K562 (cell line): ENCODE measurements at regions of chrX and their contacts with region 1.

Region 1: DNA sequence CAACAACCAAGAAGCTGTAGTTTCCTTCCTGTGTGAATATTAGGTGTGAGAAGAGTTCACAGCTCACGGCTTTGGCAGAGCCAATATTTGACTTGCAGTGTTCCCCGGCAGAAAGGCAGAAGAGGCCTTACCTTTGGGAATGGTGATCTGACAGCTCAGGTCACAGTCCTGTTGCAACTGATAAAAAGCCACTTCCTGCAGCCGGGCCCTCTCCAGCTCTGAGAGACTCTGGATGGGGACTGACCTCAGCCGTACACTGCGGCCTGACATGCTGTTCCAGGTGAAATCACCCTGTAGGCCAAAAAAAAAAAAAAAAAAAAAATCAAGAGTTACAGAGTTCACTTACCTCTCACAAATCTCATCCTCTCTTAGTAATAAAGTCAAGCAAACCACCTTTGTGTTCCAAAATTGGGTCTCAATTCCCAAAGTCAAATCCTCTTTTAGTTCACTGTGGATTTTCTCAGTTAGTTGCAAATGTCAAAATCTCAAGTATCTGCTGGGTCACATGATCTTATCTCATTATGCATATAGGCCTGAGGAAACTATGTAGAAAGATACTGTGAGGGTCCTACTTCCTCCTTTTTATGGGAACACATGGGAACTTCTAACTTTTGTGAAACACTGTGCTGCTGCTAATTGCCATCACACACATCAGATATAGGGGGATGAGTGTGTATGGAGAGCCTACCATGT is 38.6 kb upstream of the AMELX start:
- DNase-seq: peak; percentile 30 to 87 (median 56)
- ATAC-seq: peak; percentile 97
- H3K4me3 ChIP-seq: no peak overlapping the region
- H3K27ac ChIP-seq: peak overlapping the region; percentile 85
- H3K4me1 ChIP-seq: peaks cover 3 to 42% of the 10 kb centered on the region in 2 experiments; a peak in 3 of 5 replicates
- H3K27me3 ChIP-seq: no peaks in the 10 kb centered on the region
- CTCF ChIP-seq: no peak
- EP300 ChIP-seq: peak; percentile 80
- POLR2A ChIP-seq: no peak
- RAD21 ChIP-seq: 0 out of 4 replicates have a peak, but pooled peaks of 1 of the 2 experiments have one; percentile 2

Region 2: DNA sequence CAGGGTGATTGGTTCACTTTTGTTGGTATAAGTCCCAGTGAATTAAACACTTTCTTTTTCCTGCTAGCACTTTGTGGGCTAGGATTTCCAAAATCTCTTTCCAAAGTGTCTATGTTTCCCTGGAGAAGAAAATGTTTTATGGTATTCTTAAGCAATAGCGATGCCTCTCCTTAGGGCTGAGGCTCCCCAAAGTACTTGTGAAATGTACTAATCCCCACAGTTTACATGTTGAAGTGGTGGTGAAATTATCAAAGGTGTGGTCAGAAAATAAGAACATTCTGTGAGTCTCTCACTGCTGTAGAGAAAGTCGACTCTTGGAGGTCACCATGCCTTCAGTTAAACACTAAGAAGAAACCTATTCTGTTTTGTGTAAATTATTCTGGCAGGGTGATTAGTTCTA is 12.8 kb before region 1 on chrX:
- CTCF ChIA-PET with region 1: no interaction called
- POLR2A ChIA-PET with region 1: interaction called, 10 read pairs
- in situ Hi-C with region 1: no loop called
- intact Hi-C with region 1: no loop called
- DNase-seq: no peak
- ATAC-seq: no peak
- H3K4me3 ChIP-seq: no peak overlapping the region
- H3K27ac ChIP-seq: peak overlapping the region; percentile 29; the same call in 1 of the 3 replicates
- H3K4me1 ChIP-seq: peaks cover 0 to 9% of the 10 kb centered on the region in 2 experiments; a peak in 3 of 5 replicates
- H3K27me3 ChIP-seq: no peaks in the 10 kb centered on the region
- CTCF ChIP-seq: no peak
- EP300 ChIP-seq: no peak
- POLR2A ChIP-seq: no peak
- RAD21 ChIP-seq: no peak

Region 3: GRCh38 chrX:11329021-11329420 is 74.5 kb after region 1 on chrX:
- CTCF ChIA-PET with region 1: no interaction called
- POLR2A ChIA-PET with region 1: no interaction called
- in situ Hi-C with region 1: no loop called
- intact Hi-C with region 1: loop called (anchors 2 kb)
- DNase-seq: no peak
- ATAC-seq: no peak
- H3K4me3 ChIP-seq: no peak overlapping the region
- H3K27ac ChIP-seq: no peak overlapping the region; the same call in 2 of the 3 replicates
- H3K4me1 ChIP-seq: peaks cover 0 to 29% of the 10 kb centered on the region in 2 experiments; a peak in 3 of 5 replicates
- H3K27me3 ChIP-seq: no peaks in the 10 kb centered on the region
- CTCF ChIP-seq: no peak
- EP300 ChIP-seq: no peak
- POLR2A ChIP-seq: no peak
- RAD21 ChIP-seq: no peak

Region 4: GRCh38 chrX:11375614-11376119 is 121.1 kb after region 1 on chrX:
- CTCF ChIA-PET with region 1: no interaction called
- POLR2A ChIA-PET with region 1: no interaction called
- in situ Hi-C with region 1: no loop called
- intact Hi-C with region 1: loop called (anchors 2 kb)
- DNase-seq: peak; percentile 45 to 90 (median 58)
- ATAC-seq: peak; percentile 96
- H3K4me3 ChIP-seq: no peak overlapping the region
- H3K27ac ChIP-seq: peak overlapping the region; percentile 91
- H3K4me1 ChIP-seq: peaks cover 8 to 41% of the 10 kb centered on the region in 2 experiments
- H3K27me3 ChIP-seq: no peaks in the 10 kb centered on the region
- CTCF ChIP-seq: no peak
- EP300 ChIP-seq: peak; percentile 95
- POLR2A ChIP-seq: no peak
- RAD21 ChIP-seq: no peak

Region 5: DNA sequence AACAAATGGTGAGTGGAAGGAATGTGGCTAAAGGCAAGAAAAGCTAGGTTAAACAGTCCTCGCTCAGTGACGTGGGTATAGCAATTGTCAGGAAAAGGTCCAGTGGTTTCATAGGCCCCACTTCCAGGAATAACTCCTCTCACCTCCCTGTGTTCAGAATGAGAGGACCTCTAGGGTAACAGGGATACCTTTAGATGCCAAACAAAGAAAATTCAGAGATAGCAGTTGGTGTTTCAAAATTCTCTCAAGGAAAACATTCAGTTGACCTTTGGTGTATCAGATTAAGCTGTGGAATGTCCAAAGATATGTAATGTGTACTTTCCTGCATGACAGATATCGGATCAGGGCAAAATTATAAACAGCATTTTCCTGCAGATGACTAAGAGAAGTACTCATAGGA is 255.2 kb after region 1 on chrX:
- CTCF ChIA-PET with region 1: no interaction called
- POLR2A ChIA-PET with region 1: no interaction called
- in situ Hi-C with region 1: no loop called
- intact Hi-C with region 1: no loop called
- DNase-seq: no peak
- ATAC-seq: no peak
- H3K4me3 ChIP-seq: no peak overlapping the region
- H3K27ac ChIP-seq: no peak overlapping the region
- H3K4me1 ChIP-seq: 0 out of 5 replicates have a peak, but pooled peaks cover 0 to 5% of the 10 kb centered on the region in 2 experiments
- H3K27me3 ChIP-seq: no peaks in the 10 kb centered on the region
- CTCF ChIP-seq: no peak
- EP300 ChIP-seq: no peak
- POLR2A ChIP-seq: no peak
- RAD21 ChIP-seq: no peak